Activated CD4-positive, alpha-beta T cell treated with anti-CD3 and anti-CD28 coated beads, Interleukin-2, amount 10 ng/mL, durations not matched to agents 24 days and 14 days (primary cell): ENCODE measurements at regions of chr11 and their contacts with region 1.

Region 1: GRCh38 chr11:20671856-20672546 is 2.6 kb downstream of the NELL1 start:
- DNase-seq: no peak
- H3K4me3 Mint-ChIP-seq: no peak overlapping the region
- H3K27ac Mint-ChIP-seq: no peak overlapping the region
- H3K4me1 Mint-ChIP-seq: no peaks in the 10 kb centered on the region
- H3K27me3 Mint-ChIP-seq: peaks cover 56% of the 10 kb centered on the region

Region 2: GRCh38 chr11:20599221-20600019 is 72.6 kb before region 1 on chr11 and contains the start of gene SLC6A5:
- intact Hi-C with region 1: loop called (anchors 5 kb)
- DNase-seq: peak; percentile 81
- H3K4me3 Mint-ChIP-seq: no peak within 1 kb of the TSS
- H3K27ac Mint-ChIP-seq: peak within 1 kb of the TSS; percentile 3
- H3K4me1 Mint-ChIP-seq: no peaks in the 10 kb centered on the region
- H3K27me3 Mint-ChIP-seq: peaks cover 92% of the 10 kb centered on the region
- total RNA-seq, gene SLC6A5: not detected in 2 replicates

Region 3: GRCh38 chr11:20647976-20648565 is 23.9 kb before region 1 on chr11:
- intact Hi-C with region 1: loop called (anchors 1 kb)
- DNase-seq: peak; percentile 81
- H3K4me3 Mint-ChIP-seq: no peak overlapping the region
- H3K27ac Mint-ChIP-seq: no peak overlapping the region
- H3K4me1 Mint-ChIP-seq: no peaks in the 10 kb centered on the region
- H3K27me3 Mint-ChIP-seq: no peaks in the 10 kb centered on the region